ENCODE measurements at regions of chr9 and their contacts with region 1.

Region 1: DNA sequence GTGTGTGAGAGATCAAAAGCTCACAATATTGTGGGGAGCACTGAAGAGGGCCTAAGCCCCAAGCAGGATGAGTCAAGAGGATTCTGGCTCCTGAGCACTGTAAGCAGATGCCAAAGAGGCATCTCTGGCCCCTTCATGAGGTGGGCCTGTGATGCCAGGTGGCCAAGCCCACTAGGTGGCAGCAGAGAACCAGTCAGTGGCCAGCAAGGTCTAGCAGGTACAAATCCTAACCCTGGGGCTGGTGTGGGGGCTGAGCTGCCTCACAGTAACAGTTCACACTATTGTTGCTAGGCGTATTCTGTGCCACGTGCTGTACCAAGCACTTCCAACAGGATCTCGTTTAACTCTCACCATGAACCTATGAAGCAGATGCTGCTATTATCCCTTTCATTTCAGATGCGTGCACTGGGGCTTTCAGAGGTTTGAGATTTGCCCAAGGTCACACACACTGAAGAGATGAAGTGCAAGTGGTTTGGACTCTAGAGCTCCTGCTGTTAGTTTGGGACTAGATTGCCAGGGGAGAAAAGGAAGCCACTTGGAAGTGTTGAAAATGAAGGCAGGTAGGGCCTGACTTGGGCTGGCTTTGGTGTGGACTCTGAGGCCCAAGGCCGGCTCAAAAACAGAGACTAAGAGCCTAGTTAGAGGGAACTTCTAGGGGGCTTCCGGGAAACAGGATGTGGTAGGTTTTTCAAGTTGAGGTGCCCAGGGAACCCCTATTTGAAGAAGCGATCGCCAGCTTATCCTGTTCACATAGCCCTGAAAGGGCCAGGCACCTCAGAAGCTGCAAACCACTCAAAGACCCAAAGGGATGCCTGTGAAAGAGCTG is 4.4 kb upstream of the MLANA start:
- DNase-seq: peak; percentile 70
- H3K4me3 ChIP-seq: no peak overlapping the region
- H3K27ac ChIP-seq: no peak overlapping the region
- H3K4me1 ChIP-seq: no peaks in the 10 kb centered on the region
- H3K27me3 ChIP-seq: peaks cover 3 to 4% of the 10 kb centered on the region in 2 experiments
- CTCF ChIP-seq: peak; percentile 91 to 97
- POLR2A ChIP-seq: no peak

Region 2: GRCh38 chr9:5843794-5844504 is 42.4 kb before region 1 on chr9:
- CTCF ChIA-PET with region 1: interaction called, 4 read pairs
- POLR2A ChIA-PET with region 1: no interaction called
- dilution Hi-C with region 1: no loop called
- intact Hi-C with region 1: loop called (anchors 2 kb)
- DNase-seq: peak; percentile 61
- H3K4me3 ChIP-seq: peak overlapping the region in 1 of 3 experiments; percentile 26
- H3K27ac ChIP-seq: peak overlapping the region; percentile 83
- H3K4me1 ChIP-seq: peaks cover 39% of the 10 kb centered on the region
- H3K27me3 ChIP-seq: no peaks in the 10 kb centered on the region
- CTCF ChIP-seq: no peak
- POLR2A ChIP-seq: peak; percentile 60

Region 3: GRCh38 chr9:5857928-5858327 is 28.4 kb before region 1 on chr9:
- CTCF ChIA-PET with region 1: interaction called, 11 read pairs
- POLR2A ChIA-PET with region 1: no interaction called
- dilution Hi-C with region 1: no loop called
- intact Hi-C with region 1: no loop called
- DNase-seq: no peak
- H3K4me3 ChIP-seq: no peak overlapping the region
- H3K27ac ChIP-seq: no peak overlapping the region
- H3K4me1 ChIP-seq: no peaks in the 10 kb centered on the region
- H3K27me3 ChIP-seq: peaks cover 3 to 9% of the 10 kb centered on the region in 2 experiments
- CTCF ChIP-seq: no peak
- POLR2A ChIP-seq: no peak

Region 4: GRCh38 chr9:5939530-5939929 is 53.2 kb after region 1 on chr9:
- CTCF ChIA-PET with region 1: no interaction called
- POLR2A ChIA-PET with region 1: no interaction called
- dilution Hi-C with region 1: no loop called
- intact Hi-C with region 1: loop called (anchors 2 kb)
- DNase-seq: no peak
- H3K4me3 ChIP-seq: no peak overlapping the region
- H3K27ac ChIP-seq: no peak overlapping the region
- H3K4me1 ChIP-seq: no peaks in the 10 kb centered on the region
- H3K27me3 ChIP-seq: no peaks in the 10 kb centered on the region
- CTCF ChIP-seq: no peak
- POLR2A ChIP-seq: no peak

Region 5: DNA sequence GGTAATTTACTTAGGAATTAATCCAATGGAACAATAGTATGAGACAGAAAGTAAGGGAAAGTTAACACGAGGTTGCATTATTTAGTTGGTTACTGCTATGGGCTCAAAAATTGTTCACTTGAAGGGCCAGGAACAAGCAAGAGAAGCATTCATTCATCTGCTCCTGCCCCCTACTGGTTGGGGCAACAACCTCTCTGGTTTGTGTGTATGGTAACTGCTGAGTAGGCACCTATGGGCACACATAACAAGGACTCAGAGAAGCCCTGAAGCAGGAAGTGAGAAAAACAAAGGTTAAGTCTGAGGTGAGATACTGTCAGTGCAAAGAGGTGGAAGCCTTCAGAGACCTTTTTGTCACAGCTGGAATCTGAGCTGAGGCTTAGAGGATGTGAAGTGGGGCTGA is 163.5 kb after region 1 on chr9:
- CTCF ChIA-PET with region 1: interaction called, 192 read pairs
- POLR2A ChIA-PET with region 1: no interaction called
- dilution Hi-C with region 1: no loop called
- intact Hi-C with region 1: loop called (anchors 1 kb)
- DNase-seq: peak; percentile 21
- H3K4me3 ChIP-seq: no peak overlapping the region
- H3K27ac ChIP-seq: no peak overlapping the region
- H3K4me1 ChIP-seq: no peaks in the 10 kb centered on the region
- H3K27me3 ChIP-seq: peaks cover 2 to 9% of the 10 kb centered on the region in 2 experiments
- CTCF ChIP-seq: peak; percentile 22 to 33
- POLR2A ChIP-seq: no peak

Measured in endothelial cell of umbilical vein (primary cell).